Activated CD4-positive, alpha-beta memory T cell treated with anti-CD3 and anti-CD28 coated beads, Interleukin-2, amount 10 ng/mL, durations not matched to agents 7 days and 5 days (primary cell): ENCODE measurements at regions of chr1 and their contacts with region 1.

Region 1: DNA sequence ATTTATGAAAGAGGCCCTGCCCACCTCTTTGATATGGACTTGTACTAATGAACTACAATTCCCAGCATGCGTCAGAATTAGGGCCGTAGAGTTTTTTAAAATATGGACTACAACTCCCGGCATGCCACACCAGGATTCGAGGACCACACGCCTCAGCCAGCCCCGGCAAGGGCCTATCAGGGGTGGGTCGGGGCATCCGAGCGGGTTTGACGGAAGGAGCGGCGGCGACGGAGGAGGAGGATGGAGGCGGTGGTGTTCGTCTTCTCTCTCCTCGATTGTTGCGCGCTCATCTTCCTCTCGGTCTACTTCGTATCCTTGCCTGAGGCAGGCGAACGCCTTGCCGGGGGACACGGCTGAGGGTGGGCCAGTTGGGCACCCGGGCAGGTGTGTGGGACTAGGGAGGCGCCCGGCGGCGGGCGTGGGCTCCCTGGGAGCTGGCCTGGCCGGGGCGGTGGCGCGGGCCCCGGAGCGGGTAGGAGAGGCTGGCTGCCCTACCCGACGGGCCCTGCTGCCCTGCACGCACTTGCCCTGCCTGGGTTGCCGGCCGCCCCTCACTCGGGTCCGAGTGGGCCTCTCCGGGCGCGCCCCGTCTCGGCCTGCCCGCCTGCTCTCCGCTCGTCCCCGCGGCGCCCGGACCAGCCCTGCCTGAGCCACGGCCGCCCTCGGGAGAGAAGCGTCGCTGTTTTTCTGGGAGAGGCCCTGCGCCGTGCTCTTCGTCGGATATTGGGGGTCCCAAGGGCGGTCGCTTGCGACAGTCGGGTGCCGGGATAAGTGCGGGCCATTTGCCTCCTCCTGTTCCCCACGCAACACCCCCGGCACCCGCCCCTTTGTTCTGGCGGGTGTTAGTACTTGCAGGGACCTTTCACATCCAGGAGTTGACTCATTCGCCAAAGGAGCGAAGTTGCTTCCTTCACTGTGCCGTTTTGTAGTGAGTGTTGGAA is at the start of gene CNIH4:
- DNase-seq: peak; percentile 94
- H3K4me3 Mint-ChIP-seq: peak within 1 kb of the TSS; percentile 90
- H3K27ac Mint-ChIP-seq: peak within 1 kb of the TSS; percentile 83
- H3K4me1 Mint-ChIP-seq: peaks cover 41% of the 10 kb centered on the region
- H3K27me3 Mint-ChIP-seq: no peaks in the 10 kb centered on the region
- total RNA-seq, gene CNIH4: 48.6 to 52.1 TPM

Region 2: DNA sequence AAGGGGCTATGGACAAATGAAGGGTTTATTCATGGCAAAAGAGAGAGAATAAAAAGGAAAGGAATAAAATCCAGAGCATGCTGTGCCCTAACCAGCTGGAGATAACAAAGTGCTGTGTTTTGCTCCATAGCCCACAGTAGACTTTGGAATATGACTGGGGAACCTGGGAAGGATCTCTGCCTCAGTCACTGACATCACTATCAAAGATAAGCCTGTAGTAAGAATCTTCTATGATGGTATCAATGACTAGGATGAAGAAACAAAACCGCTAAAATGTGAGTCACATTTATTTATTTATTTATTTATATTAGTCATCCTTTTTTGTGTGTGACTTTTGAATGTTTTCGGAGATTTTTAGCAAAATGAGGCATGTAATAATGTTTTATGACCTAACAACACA is 83.3 kb before region 1 on chr1:
- CTCF ChIA-PET with region 1: no interaction called
- POLR2A ChIA-PET with region 1: no interaction called
- DNase-seq: no peak
- H3K4me3 Mint-ChIP-seq: no peak overlapping the region
- H3K27ac Mint-ChIP-seq: no peak overlapping the region
- H3K4me1 Mint-ChIP-seq: peaks cover 14% of the 10 kb centered on the region
- H3K27me3 Mint-ChIP-seq: no peaks in the 10 kb centered on the region

Region 3: DNA sequence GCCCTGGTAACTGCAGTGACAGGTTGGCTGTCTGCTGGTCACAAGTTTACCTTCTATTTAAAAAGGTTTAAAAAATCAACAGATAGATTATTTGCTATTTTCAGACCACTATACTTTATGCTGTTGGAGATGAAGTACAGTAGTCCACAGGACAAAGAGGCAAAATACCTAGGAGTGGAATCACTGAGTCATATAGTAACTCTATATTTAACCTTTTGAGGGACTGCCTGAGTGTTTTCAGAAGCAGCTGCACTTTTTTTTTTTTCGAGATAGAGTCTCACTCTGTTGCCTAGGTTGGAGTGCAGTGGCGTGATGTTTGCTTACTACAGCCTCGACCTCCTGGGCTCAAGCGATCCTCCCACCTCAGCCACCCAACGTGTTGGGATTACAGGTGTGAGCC is 11.5 kb after region 1 on chr1:
- CTCF ChIA-PET with region 1: interaction called, 7 read pairs
- POLR2A ChIA-PET with region 1: interaction called, 15 read pairs
- DNase-seq: no peak
- H3K4me3 Mint-ChIP-seq: no peak overlapping the region
- H3K27ac Mint-ChIP-seq: no peak overlapping the region
- H3K4me1 Mint-ChIP-seq: peaks cover 56% of the 10 kb centered on the region
- H3K27me3 Mint-ChIP-seq: no peaks in the 10 kb centered on the region

Region 4: DNA sequence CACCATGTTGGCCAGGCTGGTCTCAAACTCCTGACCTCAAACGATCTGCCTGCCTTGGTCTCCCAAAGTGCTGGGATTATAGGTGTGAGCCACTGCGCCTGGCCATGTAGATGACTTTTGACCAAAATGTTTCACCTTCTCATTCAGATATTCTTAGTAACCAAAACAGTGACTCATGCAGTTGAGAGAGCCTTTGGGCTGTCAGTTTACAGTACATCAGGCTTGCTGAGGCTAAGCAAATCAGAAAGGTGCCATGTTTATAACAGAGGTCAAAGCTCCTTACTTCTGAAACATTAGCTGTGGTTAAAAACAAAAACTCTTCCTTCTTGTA is 20.7 kb after region 1 on chr1:
- CTCF ChIA-PET with region 1: interaction called, 8 read pairs
- POLR2A ChIA-PET with region 1: interaction called, 16 read pairs
- DNase-seq: peak; percentile 49
- H3K4me3 Mint-ChIP-seq: peak overlapping the region; percentile 25
- H3K27ac Mint-ChIP-seq: peak overlapping the region; percentile 89
- H3K4me1 Mint-ChIP-seq: peaks cover 93% of the 10 kb centered on the region
- H3K27me3 Mint-ChIP-seq: no peaks in the 10 kb centered on the region

Region 5: GRCh38 chr1:224434691-224435317 is 77.8 kb after region 1 on chr1 and contains the start of gene WDR26:
- CTCF ChIA-PET with region 1: interaction called, 7 read pairs
- POLR2A ChIA-PET with region 1: interaction called, 20 read pairs
- DNase-seq: peak; percentile 88
- H3K4me3 Mint-ChIP-seq: peak within 1 kb of the TSS; percentile 93
- H3K27ac Mint-ChIP-seq: peak within 1 kb of the TSS; percentile 95
- H3K4me1 Mint-ChIP-seq: peaks cover 54% of the 10 kb centered on the region
- H3K27me3 Mint-ChIP-seq: no peaks in the 10 kb centered on the region
- total RNA-seq, gene WDR26: 114 to 118 TPM